Activated naive CD4-positive, alpha-beta T cell treated with anti-CD3 and anti-CD28 coated beads for 36 hours (primary cell): ENCODE measurements at regions of chr1 and their contacts with region 1.

Region 1: GRCh38 chr1:226332947-226333346 is 24.0 kb upstream of the LIN9 start:
- DNase-seq: no peak
- H3K4me3 Mint-ChIP-seq: no peak overlapping the region
- H3K27ac Mint-ChIP-seq: no peak overlapping the region
- H3K4me1 Mint-ChIP-seq: peaks cover 13% of the 10 kb centered on the region
- H3K27me3 Mint-ChIP-seq: no peaks in the 10 kb centered on the region

Region 2: DNA sequence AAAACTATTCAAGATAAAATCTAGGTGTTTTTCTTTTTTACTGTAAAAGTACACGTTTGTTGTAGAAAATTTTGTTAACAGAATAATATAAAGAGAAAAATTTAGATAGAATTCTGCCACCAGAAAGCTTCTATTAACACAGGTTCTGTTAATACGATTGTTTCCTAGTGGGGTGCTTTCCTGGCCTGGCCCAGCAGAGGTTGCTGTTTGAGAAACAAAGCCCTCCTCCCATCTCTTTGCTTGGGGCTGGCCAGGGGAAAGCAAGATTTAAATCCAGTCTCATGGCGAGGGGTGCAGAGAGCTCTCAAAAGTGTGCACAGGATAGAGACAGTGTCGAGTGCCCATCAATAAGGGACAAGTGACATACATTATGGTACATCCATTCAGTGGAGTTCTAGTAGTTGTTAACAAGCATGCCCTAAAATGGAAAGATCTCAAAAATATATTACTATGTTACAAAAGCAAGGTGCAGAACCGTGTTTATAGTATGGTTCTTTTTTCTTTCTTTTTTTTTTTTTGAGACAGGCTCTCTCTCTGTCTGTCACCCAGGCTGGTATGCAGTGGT is 131.8 kb before region 1 on chr1:
- CTCF ChIA-PET with region 1: interaction called, 14 read pairs
- intact Hi-C with region 1: loop called (anchors 1 kb)
- DNase-seq: peak; percentile 16
- H3K4me3 Mint-ChIP-seq: no peak overlapping the region
- H3K27ac Mint-ChIP-seq: no peak overlapping the region
- H3K4me1 Mint-ChIP-seq: no peaks in the 10 kb centered on the region
- H3K27me3 Mint-ChIP-seq: peaks cover 6% of the 10 kb centered on the region

Region 3: GRCh38 chr1:226223786-226224244 is 109.1 kb before region 1 on chr1:
- CTCF ChIA-PET with region 1: interaction called, 9 read pairs
- intact Hi-C with region 1: loop called (anchors 10 kb)
- DNase-seq: peak; percentile 16
- H3K4me3 Mint-ChIP-seq: peak overlapping the region; percentile 68
- H3K27ac Mint-ChIP-seq: no peak overlapping the region
- H3K4me1 Mint-ChIP-seq: peaks cover 5% of the 10 kb centered on the region
- H3K27me3 Mint-ChIP-seq: peaks cover 20% of the 10 kb centered on the region

Region 4: GRCh38 chr1:226279498-226279897 is 53.4 kb before region 1 on chr1:
- CTCF ChIA-PET with region 1: interaction called, 10 read pairs
- intact Hi-C with region 1: no loop called
- DNase-seq: no peak
- H3K4me3 Mint-ChIP-seq: no peak overlapping the region
- H3K27ac Mint-ChIP-seq: no peak overlapping the region
- H3K4me1 Mint-ChIP-seq: no peaks in the 10 kb centered on the region
- H3K27me3 Mint-ChIP-seq: no peaks in the 10 kb centered on the region

Region 5: DNA sequence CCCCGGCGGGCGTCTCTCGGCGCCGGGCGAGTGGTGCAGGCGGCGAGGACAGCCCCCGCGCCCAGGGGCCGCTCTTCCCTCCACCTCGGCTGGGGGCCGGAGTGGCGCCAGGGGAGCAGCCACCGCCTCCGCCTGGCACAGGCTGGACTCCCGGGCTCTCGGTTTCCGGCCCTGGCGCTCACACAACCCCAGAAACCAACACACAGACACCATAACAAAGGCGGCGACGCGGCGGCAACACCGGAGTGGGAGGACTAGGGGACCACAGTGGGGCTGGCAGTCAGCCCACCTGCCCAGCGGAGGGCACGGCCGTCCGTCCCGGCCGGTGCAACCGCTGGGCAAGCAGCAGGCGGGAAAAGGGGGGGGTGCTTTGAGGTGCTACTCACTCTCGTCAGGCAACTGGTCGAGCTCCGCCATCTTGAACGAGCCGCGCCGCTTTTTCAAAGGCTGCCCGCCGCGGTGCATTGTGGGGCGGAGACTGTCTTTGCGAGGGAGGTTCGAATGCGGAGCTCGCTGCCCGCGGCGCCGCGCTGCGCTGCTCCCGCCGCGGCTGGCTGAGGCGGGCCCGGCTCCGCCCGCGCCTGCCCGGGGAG is 24.1 kb before region 1 on chr1 and contains the start of gene LIN9:
- CTCF ChIA-PET with region 1: interaction called, 11 read pairs
- intact Hi-C with region 1: loop called (anchors 1 kb)
- DNase-seq: peak; percentile 96
- H3K4me3 Mint-ChIP-seq: peak within 1 kb of the TSS; percentile 91
- H3K27ac Mint-ChIP-seq: peak within 1 kb of the TSS; percentile 82
- H3K4me1 Mint-ChIP-seq: peaks cover 16% of the 10 kb centered on the region
- H3K27me3 Mint-ChIP-seq: peaks cover 16% of the 10 kb centered on the region
- total RNA-seq, gene LIN9: 7.7 to 9.5 TPM

Region 6: DNA sequence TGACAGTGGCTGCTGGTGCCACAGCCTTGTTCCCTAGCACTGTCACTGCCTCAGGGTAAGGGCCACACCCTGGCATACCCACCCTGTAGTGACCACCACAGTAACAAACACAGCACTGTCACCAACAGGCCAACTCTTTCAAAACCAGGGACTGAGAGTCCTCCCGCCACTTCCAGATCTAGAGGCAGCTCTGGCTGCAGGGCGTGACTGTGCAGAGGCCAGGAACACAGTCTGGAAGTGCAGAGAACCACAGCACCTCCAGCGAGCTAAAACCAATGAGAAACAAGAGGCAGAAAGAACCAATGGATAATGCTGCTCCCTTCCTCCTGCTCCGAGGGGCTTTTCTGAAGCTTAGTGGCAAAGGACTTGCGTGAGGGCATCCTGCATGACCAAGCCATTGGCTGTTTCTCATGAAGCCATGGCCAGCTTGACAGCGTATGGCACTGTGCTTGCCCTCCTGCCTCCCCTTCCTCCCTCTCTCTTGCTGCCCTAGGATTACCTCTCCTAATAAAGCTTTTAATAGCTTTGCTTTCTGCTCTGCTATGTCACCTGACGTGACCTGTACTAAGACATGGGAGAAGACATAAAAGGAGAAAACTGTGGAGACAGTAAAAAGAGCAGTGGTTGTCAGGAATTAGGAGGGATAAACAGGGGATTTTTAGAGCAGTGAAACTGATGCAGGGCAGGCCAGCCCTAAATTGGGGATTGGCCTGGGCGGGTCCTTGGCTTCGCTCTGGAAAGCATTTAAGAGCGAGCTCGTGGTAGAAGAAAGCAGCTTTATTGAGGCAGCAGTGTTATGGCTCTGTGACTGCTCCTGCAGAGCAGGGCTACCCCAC is 67.8 kb after region 1 on chr1:
- CTCF ChIA-PET with region 1: interaction called, 14 read pairs
- intact Hi-C with region 1: no loop called
- DNase-seq: no peak
- H3K4me3 Mint-ChIP-seq: no peak overlapping the region
- H3K27ac Mint-ChIP-seq: peak overlapping the region; percentile 7
- H3K4me1 Mint-ChIP-seq: peaks cover 52% of the 10 kb centered on the region
- H3K27me3 Mint-ChIP-seq: no peaks in the 10 kb centered on the region